Activated T-helper 2 cell treated with anti-CD3 and anti-CD28 coated beads, Interferon-gamma antibody, Interleukin-2, Interleukin-4, amounts not matched to agents 10 μg/mL and 5 μg/mL and 100 μg/mL, durations not matched to agents 14 hours and 24 hours and 36 hours (primary cell): ENCODE measurements at regions of chr3 and their contacts with region 1.

Region 1: DNA sequence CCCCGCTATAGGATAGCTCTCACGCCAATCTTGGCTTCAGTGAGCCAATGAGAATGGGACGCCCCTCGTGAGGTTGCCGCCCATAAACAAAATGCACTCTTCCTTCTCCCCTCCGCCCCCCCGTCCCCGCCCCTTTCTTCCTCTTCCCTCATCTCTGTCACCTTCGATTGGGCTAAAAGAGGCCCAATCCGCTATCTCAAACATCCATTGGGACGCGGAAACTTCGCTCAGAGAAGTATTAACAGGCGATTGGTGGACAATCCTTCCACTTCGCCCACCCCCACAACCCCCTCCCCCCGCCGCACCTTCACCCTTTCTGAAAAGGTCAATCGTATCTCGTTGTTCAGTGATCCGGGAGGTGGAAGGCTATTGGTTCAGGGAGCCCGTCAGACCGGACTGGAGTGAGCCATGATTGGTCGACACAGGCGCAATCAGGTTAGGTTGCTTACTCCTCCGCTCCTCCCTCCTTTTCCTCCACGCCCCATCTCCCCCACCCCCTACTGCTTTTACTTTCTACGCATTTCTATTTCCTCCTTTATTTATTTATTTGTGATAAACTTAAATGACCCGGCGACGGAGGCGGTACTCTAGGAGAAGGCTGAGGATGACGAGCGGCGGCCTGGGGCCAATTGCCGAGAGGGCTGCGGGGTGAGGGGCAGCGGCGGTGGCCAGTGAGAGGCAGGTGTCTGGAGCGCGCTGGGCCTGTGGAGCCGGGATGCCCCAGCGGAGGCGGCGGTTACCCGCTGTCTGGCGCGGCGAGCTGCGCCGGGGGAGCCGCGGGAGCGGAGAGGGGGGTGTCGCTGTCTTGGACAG is 447 bp upstream of the ZBTB20 start:
- DNase-seq: peak; percentile 96
- H3K4me3 Mint-ChIP-seq: peak overlapping the region; percentile 97
- H3K27ac Mint-ChIP-seq: peak overlapping the region; percentile 99
- H3K4me1 Mint-ChIP-seq: peaks cover 17% of the 10 kb centered on the region
- H3K27me3 Mint-ChIP-seq: peaks cover 9% of the 10 kb centered on the region

Region 2: DNA sequence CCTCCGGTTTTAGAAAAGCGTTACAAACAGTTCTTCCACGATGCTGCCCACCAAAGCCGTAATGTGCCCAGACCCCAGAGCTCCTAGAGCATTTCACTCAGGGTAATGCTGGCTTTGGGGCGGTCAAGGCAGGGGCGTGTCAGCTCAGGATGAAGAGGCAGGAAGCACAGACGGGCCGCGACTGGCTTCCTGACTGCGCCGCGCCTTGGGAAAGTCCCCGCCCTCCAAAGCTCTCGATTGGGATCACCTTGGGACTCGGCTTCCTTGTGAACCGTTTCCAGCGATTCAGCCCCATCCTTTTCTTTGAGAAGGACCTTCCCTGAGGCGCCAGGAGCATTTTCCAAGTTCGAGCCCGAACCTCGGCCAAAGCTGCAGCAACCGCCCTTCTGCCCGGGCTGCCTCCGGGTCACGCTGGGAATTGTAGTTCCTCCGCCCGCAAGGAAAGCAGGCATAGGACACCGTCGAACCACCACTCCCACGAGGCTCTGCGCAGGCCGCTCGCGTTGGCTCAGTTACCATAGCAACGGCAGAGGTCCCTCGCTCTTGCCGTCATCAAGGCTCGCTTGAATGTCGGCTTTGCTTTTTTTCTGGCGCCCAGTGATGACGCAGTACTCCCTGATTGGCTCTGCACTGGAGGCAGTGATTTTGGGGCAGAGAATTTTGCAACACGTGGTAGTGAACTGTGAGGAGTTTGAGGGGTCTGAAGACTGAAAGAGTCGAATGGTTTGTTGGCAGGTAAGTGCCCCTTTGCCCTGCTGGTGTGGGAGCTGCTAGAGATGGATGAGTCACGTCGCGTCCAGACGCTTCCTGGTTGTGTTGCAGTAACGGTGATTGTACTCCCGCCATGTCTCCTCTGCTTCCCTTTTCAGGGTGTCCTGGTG is 1091.2 kb before region 1 on chr3 and contains the starts of genes CCDC191 and QTRT2:
- intact Hi-C with region 1: loop called (anchors 1 kb)
- DNase-seq: peak; percentile 98
- H3K4me3 Mint-ChIP-seq: peak within 1 kb of the TSS; percentile 91
- H3K27ac Mint-ChIP-seq: peak within 1 kb of the TSS; percentile 89
- H3K4me1 Mint-ChIP-seq: peaks cover 22% of the 10 kb centered on the region
- H3K27me3 Mint-ChIP-seq: no peaks in the 10 kb centered on the region
- total RNA-seq, gene CCDC191: 0.68 and 0.76 TPM in 2 replicates
- total RNA-seq, gene QTRT2: 40.2 and 41.3 TPM in 2 replicates

Region 3: DNA sequence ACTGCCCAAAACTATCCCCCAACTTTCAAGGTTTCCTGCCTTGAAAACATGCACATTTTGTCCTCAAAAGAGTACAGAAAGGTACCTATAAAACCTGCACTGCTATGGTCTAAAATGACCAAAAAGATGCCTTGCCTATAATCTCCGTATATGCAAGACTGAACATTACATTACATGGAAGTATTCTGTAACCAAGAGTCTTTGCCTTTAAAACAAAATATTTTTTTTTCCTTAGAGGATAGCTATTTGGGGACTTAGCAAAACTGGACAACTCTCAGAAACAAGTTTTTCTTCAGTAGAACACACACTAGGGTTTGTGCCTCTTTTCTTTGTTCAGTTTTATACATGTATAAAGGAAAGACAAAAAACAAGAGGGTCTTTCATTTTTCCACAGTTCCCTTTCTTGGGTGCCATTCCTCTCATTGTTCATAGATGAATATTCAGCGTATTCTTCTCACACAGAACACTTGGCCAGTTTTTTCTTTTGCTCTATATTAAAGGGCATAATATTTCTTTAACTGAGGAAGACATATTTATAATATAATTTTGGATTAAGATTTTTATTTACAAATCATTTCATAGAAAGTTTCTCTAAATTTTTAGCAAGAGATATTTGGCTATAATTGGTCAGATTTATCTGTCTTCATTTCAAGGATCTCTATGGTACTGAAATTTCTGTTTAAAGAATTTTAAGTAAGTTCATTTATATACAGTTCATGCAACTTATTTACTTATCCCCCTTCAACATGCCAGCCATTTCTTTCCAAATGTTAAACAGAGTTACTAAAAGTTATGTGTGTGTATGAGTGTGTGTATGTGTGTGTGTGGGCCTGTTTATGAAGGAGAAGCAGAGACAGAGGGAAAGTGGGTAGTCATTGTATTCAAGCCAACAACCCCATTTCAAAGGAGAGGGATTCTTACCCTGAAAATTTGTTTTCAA is 143.1 kb before region 1 on chr3:
- intact Hi-C with region 1: no loop called
- DNase-seq: no peak
- H3K4me3 Mint-ChIP-seq: no peak overlapping the region
- H3K27ac Mint-ChIP-seq: no peak overlapping the region
- H3K4me1 Mint-ChIP-seq: no peaks in the 10 kb centered on the region
- H3K27me3 Mint-ChIP-seq: no peaks in the 10 kb centered on the region

Region 4: DNA sequence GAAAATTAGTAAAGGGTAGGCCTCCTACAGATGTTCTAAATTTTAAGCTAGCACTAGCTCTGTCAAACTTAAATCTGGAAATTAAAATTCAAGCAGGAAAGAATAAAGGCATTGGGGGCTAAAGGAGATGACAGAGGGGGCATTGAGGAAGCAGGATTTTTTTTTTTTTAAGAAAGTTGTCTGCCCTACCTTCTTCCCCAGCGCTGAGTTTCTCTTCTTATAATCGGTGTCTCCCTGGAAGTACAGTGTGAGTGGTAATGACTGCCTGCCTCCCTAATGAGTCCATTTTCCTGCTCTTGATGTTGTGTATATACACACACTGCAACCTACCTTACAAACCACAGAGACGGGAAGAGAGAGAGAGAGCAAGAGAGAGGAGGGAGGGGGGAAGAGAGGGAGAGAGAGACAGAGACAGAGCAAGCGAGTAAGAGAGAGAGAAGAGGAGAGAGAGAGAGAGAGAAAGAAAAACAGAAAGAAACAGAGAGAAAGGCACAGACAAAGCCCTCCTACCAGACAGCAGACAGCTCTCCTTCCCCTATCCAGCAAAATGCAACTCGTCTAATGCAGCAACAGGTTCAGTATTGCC is 47.5 kb before region 1 on chr3:
- intact Hi-C with region 1: loop called (anchors 5 kb)
- DNase-seq: no peak
- H3K4me3 Mint-ChIP-seq: peak overlapping the region; percentile 72
- H3K27ac Mint-ChIP-seq: peak overlapping the region; percentile 52
- H3K4me1 Mint-ChIP-seq: peaks cover 17% of the 10 kb centered on the region
- H3K27me3 Mint-ChIP-seq: no peaks in the 10 kb centered on the region

Region 5: GRCh38 chr3:115658337-115659181 is 511.0 kb after region 1 on chr3:
- intact Hi-C with region 1: loop called (anchors 2 kb)
- DNase-seq: peak; percentile 62
- H3K4me3 Mint-ChIP-seq: peak overlapping the region; percentile 93
- H3K27ac Mint-ChIP-seq: peak overlapping the region; percentile 99
- H3K4me1 Mint-ChIP-seq: peaks cover 33% of the 10 kb centered on the region
- H3K27me3 Mint-ChIP-seq: peaks cover 5% of the 10 kb centered on the region